ENCODE measurements at regions of chr12 and their contacts with region 1.

Region 1: DNA sequence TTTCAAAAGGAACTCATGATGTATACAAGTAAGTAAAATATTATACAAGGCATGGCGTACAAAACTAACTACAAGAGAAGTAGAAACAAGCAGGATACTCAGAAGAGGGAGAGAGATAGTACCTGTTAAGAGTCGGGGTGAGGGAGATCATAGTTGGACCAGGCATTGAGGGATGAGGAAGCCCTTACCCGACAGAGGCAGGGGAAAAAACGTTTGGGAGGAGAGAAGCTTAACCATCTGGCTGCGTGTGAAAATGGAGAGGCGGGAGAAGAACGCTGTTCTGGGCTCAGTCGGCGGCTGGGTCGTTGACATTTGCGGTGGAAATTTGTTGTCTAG is 575 bp upstream of the FMNL3 start:
- DNase-seq: no peak
- H3K4me3 ChIP-seq: peak overlapping the region; percentile 96
- H3K27ac ChIP-seq: no peak overlapping the region
- H3K4me1 ChIP-seq: peaks cover 47% of the 10 kb centered on the region
- H3K27me3 ChIP-seq: peaks cover 35% of the 10 kb centered on the region
- CTCF ChIP-seq: peak; percentile 2

Region 2: DNA sequence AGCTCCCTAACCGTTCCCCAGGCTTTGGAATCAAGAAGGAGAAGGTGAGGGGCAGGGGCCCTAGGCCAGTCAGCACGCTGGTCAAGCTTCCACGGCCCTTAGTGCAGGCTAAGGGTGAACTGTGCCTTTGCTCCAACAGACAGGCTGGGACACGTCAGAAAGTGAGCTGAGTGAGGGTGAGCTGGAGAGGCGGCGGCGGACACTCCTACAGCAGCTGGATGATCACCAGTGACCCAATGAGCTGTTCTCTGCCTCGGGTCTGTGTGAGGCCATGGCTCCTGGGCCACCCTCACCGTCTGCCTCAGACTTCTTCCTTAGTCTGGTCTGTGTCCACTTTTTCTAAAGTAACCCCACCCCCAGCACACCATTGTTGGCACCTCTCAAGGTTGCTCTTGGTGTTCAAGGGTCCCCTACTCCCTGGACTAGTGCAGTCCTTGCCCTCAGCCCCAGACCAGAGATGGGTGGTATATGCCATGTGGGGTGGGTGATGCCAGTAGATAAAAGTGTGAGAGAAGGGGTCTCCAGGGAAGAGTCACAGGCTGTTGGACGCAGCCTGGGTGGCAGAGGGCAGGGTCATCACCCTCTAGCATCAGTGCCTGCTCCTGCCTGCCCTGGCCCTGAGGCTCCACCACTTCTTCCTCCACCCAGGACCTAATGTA is 63.7 kb before region 1 on chr12:
- intact Hi-C with region 1: loop called (anchors 2 kb)
- DNase-seq: no peak
- H3K4me3 ChIP-seq: no peak overlapping the region
- H3K27ac ChIP-seq: peak overlapping the region; percentile 86
- H3K4me1 ChIP-seq: peaks cover 49% of the 10 kb centered on the region
- H3K27me3 ChIP-seq: no peaks in the 10 kb centered on the region
- CTCF ChIP-seq: no peak